ENCODE measurements at regions of chr4 and their contacts with region 1.

Region 1: GRCh38 chr4:1644891-1645657 is 39.0 kb downstream of the FAM53A start:
- DNase-seq: no peak
- H3K4me3 ChIP-seq: no peak overlapping the region
- H3K4me3 Mint-ChIP-seq: no peak overlapping the region
- H3K27ac ChIP-seq: no peak overlapping the region
- H3K27ac Mint-ChIP-seq: no peak overlapping the region
- H3K4me1 ChIP-seq: no peaks in the 10 kb centered on the region
- H3K4me1 Mint-ChIP-seq: peaks cover 0 to 4% (median 3%) of the 10 kb centered on the region in 3 donors
- H3K27me3 ChIP-seq: no peaks in the 10 kb centered on the region
- H3K27me3 Mint-ChIP-seq: no peaks in the 10 kb centered on the region

Region 2: GRCh38 chr4:2515830-2516550 is 870.9 kb after region 1 on chr4:
- CTCF ChIA-PET with region 1: no interaction called
- POLR2A ChIA-PET with region 1: interaction called, 12 read pairs
- DNase-seq: no peak
- H3K4me3 ChIP-seq: no peak overlapping the region
- H3K4me3 Mint-ChIP-seq: peak overlapping the region in 1 of 7 donors; percentile 18
- H3K27ac ChIP-seq: no peak overlapping the region
- H3K27ac Mint-ChIP-seq: peak overlapping the region in 4 of 8 donors; percentile 22 to 63 (median 30)
- H3K4me1 ChIP-seq: peaks cover 1% of the 10 kb centered on the region
- H3K4me1 Mint-ChIP-seq: peaks cover 8 to 10% (median 9%) of the 10 kb centered on the region in 3 donors
- H3K27me3 ChIP-seq: no peaks in the 10 kb centered on the region
- H3K27me3 Mint-ChIP-seq: no peaks in the 10 kb centered on the region

Measured in CD8-positive, alpha-beta memory T cell (primary cell).